PC-3 (cell line): ENCODE measurements at regions of chr2 and their contacts with region 1.

Region 1: DNA sequence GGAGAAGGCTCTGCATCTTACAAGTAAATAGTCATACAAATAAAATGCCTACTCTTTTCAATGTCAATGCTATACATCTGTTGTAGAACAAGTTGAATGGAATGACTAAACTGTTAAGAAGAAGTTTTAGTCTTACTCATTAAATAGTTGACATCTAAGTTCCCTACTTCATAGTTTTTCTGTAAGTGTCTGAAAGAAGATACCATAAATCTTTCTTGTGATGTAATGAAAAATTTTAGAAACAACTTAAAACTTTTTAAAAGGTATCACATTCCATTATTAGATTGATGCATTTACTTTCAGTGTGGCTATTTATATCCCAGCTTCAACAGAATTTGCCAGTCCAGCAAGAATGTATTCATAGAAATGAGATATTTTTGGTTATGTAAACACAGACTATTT is 185.2 kb upstream of the EPC2 start:
- DNase-seq: no peak
- ATAC-seq: no peak
- H3K4me3 ChIP-seq: no peak overlapping the region
- H3K27ac ChIP-seq: no peak overlapping the region
- H3K4me1 ChIP-seq: no peaks in the 10 kb centered on the region
- H3K27me3 ChIP-seq: no peaks in the 10 kb centered on the region
- CTCF ChIP-seq: no peak

Region 2: GRCh38 chr2:148483666-148484065 is 24.3 kb after region 1 on chr2:
- CTCF ChIA-PET with region 1: no interaction called
- POLR2A ChIA-PET with region 1: no interaction called
- intact Hi-C with region 1: loop called (anchors 1 kb)
- DNase-seq: no peak
- ATAC-seq: no peak
- H3K4me3 ChIP-seq: no peak overlapping the region
- H3K27ac ChIP-seq: no peak overlapping the region
- H3K4me1 ChIP-seq: no peaks in the 10 kb centered on the region
- H3K27me3 ChIP-seq: no peaks in the 10 kb centered on the region
- CTCF ChIP-seq: no peak

Region 3: GRCh38 chr2:149703281-149703680 is 1243.9 kb after region 1 on chr2:
- CTCF ChIA-PET with region 1: no interaction called
- POLR2A ChIA-PET with region 1: no interaction called
- intact Hi-C with region 1: no loop called
- DNase-seq: no peak
- ATAC-seq: no peak
- H3K4me3 ChIP-seq: no peak overlapping the region
- H3K27ac ChIP-seq: no peak overlapping the region
- H3K4me1 ChIP-seq: no peaks in the 10 kb centered on the region
- H3K27me3 ChIP-seq: no peaks in the 10 kb centered on the region
- CTCF ChIP-seq: no peak